Activated T-helper 1 cell treated with anti-CD3 and anti-CD28 coated beads, Interleukin-12 subunit alpha, Interleukin-12 subunit beta, Interleukin-2, Interleukin-4 antibody, amounts not matched to agents 30 ng/mL and 10 ng/mL and 1 ng/mL, durations not matched to agents 14 hours and 24 hours and 36 hours (primary cell): ENCODE measurements at regions of chr3 and their contacts with region 1.

Region 1: GRCh38 chr3:71753630-71754483 is at the start of gene GPR27:
- DNase-seq: no peak
- H3K4me3 Mint-ChIP-seq: peak within 1 kb of the TSS; percentile 63
- H3K27ac Mint-ChIP-seq: no peak within 1 kb of the TSS
- H3K4me1 Mint-ChIP-seq: peaks cover 4% of the 10 kb centered on the region
- H3K27me3 Mint-ChIP-seq: peaks cover 63% of the 10 kb centered on the region
- total RNA-seq, gene GPR27: 0.70 and 1.3 TPM in 2 replicates

Region 2: DNA sequence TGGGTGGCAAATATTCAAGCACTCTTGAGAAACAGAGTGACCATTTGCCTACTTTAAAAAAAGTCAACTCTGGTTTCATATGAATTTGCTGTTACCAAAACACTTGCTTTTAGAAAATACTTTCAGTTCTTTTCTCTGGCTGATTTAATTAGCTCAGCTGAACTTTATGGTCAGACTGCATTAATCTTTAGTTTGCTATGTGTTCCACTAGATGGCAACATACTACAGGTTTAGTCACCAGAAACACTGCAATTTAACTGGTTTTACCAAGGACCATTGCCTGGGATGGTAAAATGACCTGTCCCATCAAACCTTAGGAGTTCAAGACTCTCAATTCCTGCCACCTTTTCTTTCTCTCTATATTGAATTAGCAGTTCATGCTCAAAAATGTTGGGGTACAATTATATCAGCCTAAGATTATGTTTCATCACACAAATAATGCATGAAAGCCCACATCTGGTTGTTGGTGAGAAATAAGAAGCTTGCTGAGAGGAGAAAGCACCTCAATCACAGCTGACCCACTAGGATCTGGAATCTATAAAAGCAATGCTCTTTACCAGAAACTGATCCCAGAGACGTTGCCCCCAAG is 42.9 kb before region 1 on chr3:
- intact Hi-C with region 1: loop called (anchors 2 kb)
- DNase-seq: no peak
- H3K4me3 Mint-ChIP-seq: no peak overlapping the region
- H3K27ac Mint-ChIP-seq: no peak overlapping the region
- H3K4me1 Mint-ChIP-seq: peaks cover 56% of the 10 kb centered on the region
- H3K27me3 Mint-ChIP-seq: no peaks in the 10 kb centered on the region

Region 3: DNA sequence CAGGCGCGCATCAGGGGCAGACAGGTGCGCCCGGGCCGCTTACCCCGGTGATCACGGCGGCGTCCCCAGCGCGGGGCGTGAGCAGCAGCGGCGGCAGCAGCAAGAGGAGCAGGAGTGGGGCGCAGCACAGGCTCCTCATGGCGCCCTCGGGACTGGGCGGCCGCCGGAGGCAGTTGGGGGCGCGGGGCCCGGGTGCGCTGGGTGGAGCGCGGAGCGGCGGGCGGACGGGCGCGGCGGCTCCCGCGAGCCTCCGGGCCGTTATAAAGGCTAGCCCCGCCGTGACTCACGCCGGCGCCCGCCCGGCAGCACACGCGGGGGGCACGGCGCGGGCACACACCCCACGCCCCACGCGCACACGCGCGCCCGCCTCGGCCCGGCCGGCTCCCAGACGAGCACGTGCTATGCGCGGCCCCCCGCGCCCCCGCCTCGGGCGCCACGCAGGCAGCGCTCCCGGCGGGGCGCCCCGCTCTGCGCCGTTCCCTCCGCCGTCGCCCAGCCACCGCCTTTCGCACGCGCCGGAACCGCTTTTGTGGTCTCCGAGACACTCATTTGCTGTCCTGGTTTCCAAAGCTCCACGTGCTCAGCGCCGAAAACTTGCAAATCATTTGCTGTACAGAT is 31.2 kb after region 1 on chr3 and contains the start of gene PROK2:
- intact Hi-C with region 1: loop called (anchors 2 kb)
- DNase-seq: no peak
- H3K4me3 Mint-ChIP-seq: peak within 1 kb of the TSS; percentile 79
- H3K27ac Mint-ChIP-seq: peak within 1 kb of the TSS; percentile 67
- H3K4me1 Mint-ChIP-seq: peaks cover 14% of the 10 kb centered on the region
- H3K27me3 Mint-ChIP-seq: peaks cover 63% of the 10 kb centered on the region
- total RNA-seq, gene PROK2: not detected in 2 replicates